ENCODE measurements at regions of chr5 and their contacts with region 1.

Region 1: DNA sequence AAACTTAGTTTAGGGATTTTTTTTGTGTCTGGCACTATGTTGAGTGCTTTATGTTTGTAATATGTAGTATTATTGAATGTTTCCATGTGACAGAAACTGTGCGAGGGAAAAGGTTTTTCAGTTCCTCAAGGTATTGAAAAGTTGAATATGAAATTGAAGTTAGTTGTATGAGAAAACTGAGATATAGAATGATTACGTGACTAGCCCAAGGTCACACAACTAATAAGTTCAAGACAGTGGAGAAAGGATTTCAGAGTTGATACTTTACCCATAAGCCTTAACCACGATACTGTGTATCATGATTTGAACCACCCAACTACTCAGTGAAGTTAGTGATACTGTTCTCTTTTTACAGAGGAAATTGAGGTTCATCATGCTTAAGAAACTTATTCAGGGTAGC is 5.7 kb downstream of the NIPBL start:
- DNase-seq: no peak
- H3K4me3 ChIP-seq: no peak overlapping the region
- H3K27ac ChIP-seq: no peak overlapping the region
- H3K4me1 ChIP-seq: peaks cover 34 to 46% of the 10 kb centered on the region in 2 donors
- H3K27me3 ChIP-seq: no peaks in the 10 kb centered on the region
- CTCF ChIP-seq: no peak
- POLR2A ChIP-seq: no peak

Region 2: GRCh38 chr5:36934740-36935356 is 52.6 kb after region 1 on chr5:
- intact Hi-C with region 1: loop called (anchors 10 kb)
- DNase-seq: no peak
- H3K4me3 ChIP-seq: no peak overlapping the region
- H3K27ac ChIP-seq: no peak overlapping the region
- H3K4me1 ChIP-seq: peaks cover 3 to 11% of the 10 kb centered on the region in 2 donors
- H3K27me3 ChIP-seq: no peaks in the 10 kb centered on the region
- CTCF ChIP-seq: no peak
- POLR2A ChIP-seq: no peak

Region 3: GRCh38 chr5:37197340-37198050 is 315.2 kb after region 1 on chr5:
- intact Hi-C with region 1: no loop called
- DNase-seq: no peak
- H3K4me3 ChIP-seq: no peak overlapping the region
- H3K27ac ChIP-seq: no peak overlapping the region
- H3K4me1 ChIP-seq: no peaks in the 10 kb centered on the region
- H3K27me3 ChIP-seq: no peaks in the 10 kb centered on the region
- CTCF ChIP-seq: no peak
- POLR2A ChIP-seq: no peak